ENCODE measurements at regions of chrX and their contacts with region 1.

Region 1: GRCh38 chrX:147911192-147912022 is at the start of gene FMR1:
- DNase-seq: peak; percentile 91
- H3K4me3 Mint-ChIP-seq: peak within 1 kb of the TSS; percentile 96
- H3K27ac Mint-ChIP-seq: peak within 1 kb of the TSS; percentile 92
- H3K4me1 Mint-ChIP-seq: peaks cover 37% of the 10 kb centered on the region
- H3K27me3 Mint-ChIP-seq: no peaks in the 10 kb centered on the region
- total RNA-seq, gene FMR1: 35.9 and 37.5 TPM in 2 replicates

Region 2: GRCh38 chrX:147738265-147738664 is 173.1 kb before region 1 on chrX:
- intact Hi-C with region 1: loop called (anchors 1 kb)
- DNase-seq: peak; percentile 1
- H3K4me3 Mint-ChIP-seq: peak overlapping the region; percentile 40
- H3K27ac Mint-ChIP-seq: peak overlapping the region; percentile 84
- H3K4me1 Mint-ChIP-seq: peaks cover 33% of the 10 kb centered on the region
- H3K27me3 Mint-ChIP-seq: no peaks in the 10 kb centered on the region

Region 3: DNA sequence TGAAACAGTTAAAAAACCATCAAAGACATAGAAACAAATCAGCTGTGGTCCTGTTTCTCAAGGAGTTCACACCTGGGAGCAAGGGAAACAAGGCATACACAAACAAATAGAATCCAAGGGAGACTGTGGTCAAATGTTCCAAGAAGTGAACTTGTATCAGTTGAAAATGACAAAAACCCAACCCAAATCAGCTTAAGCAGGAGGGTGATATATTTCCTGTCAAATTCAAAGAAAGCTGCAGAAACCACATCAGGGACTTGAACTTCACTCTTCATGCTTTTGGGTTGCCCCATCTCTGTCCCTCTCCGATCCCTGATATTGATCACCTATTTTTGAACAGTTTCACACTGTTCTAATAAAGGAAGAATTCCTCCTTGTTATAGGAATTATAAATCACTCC is 148.3 kb before region 1 on chrX:
- intact Hi-C with region 1: no loop called
- DNase-seq: no peak
- H3K4me3 Mint-ChIP-seq: no peak overlapping the region
- H3K27ac Mint-ChIP-seq: peak overlapping the region; percentile 50
- H3K4me1 Mint-ChIP-seq: peaks cover 25% of the 10 kb centered on the region
- H3K27me3 Mint-ChIP-seq: peaks cover 1% of the 10 kb centered on the region

Region 4: DNA sequence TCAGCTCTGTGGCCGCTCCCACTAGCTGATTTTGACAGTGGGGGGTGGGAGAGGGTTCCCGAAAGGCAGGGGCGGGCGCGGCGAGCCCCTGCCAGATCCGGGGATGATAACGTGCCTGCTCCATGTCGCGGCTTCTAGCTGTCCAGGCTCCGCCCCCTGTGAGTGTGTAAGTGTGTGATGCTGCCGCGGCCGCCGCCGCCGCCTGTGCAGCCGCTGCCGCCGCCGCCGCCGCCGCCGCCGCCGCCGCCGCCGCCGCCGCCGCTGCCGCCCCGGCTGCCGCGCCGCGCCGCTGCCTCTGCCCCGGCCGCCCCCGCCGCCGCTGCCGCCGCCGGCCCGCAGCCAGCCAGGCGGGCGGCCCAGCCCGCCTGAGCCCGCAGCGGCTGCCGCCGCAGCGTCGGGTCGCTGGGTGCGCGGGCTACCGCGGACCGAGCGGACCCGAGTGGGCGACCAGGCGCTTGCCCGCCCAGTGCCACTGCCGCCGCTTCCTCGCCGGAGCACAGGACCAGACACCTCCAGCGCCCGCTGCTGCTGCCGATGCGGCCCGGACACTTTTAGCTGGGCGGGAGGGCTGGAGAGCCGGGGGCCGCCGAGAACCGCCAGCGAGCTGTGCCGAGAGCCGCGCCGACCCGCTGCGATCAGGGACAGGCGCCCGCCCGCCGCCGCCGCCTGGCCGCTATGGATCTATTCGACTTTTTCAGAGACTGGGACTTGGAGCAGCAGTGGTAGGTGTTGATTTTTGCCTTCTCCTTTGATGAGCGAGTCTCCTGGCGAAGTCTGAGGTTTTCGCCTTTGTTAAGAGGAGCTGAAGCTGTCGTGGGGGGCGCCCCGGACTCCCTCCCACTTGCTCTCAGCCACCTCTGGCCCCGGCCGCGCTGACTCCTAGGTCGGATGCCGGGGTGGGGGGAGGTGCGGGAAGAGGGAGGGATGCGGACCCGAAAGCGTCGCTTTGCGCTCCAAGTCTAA is 589.3 kb after region 1 on chrX and contains the start of gene AFF2:
- intact Hi-C with region 1: loop called (anchors 2 kb)
- DNase-seq: no peak
- H3K4me3 Mint-ChIP-seq: peak within 1 kb of the TSS; percentile 85
- H3K27ac Mint-ChIP-seq: peak within 1 kb of the TSS; percentile 18
- H3K4me1 Mint-ChIP-seq: peaks cover 15% of the 10 kb centered on the region
- H3K27me3 Mint-ChIP-seq: peaks cover 13% of the 10 kb centered on the region
- total RNA-seq, gene AFF2: 1.5 and 1.8 TPM in 2 replicates

Region 5: GRCh38 chrX:149631234-149632165 is 1720.1 kb after region 1 on chrX and contains the start of gene TMEM185A:
- intact Hi-C with region 1: loop called (anchors 5 kb)
- DNase-seq: peak; percentile 73
- H3K4me3 Mint-ChIP-seq: peak within 1 kb of the TSS; percentile 95
- H3K27ac Mint-ChIP-seq: peak within 1 kb of the TSS; percentile 85
- H3K4me1 Mint-ChIP-seq: peaks cover 43% of the 10 kb centered on the region
- H3K27me3 Mint-ChIP-seq: peaks cover 1% of the 10 kb centered on the region
- total RNA-seq, gene TMEM185A: 18.7 and 25.5 TPM in 2 replicates

Region 6: DNA sequence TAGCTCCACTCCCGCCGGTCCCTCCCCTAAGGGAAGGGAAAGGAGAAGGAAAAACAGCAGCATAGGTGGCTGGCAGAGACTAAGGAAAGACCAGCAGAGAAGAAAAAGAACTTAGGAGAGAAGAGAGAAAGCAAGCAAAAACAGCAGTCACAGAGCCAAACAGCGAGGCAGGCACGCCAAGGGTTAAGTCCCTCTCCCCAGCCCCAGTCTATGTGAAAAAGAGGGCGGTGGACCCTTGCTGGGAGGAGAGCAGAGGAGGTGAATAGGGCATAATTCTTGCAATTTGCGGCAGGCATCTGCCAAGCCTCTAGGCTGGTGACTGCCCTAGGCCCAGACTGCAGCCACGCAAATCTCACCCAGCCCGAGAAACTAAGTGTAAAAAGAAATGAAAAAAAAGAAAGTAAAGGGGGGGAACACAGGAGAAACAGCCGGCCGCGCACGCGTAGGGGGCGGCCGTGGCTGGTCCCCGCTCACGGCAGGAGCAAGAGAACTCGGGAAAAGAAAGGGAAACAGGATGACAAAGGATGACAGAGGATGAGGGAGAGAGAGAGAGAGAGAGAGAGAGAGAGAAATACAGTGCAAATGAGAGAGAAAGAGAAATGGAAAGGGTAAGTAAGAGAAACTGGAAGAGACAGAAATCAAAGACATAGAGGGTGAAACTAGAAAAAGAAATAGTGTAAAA is 1918.9 kb after region 1 on chrX:
- intact Hi-C with region 1: loop called (anchors 10 kb)
- DNase-seq: peak; percentile 14
- H3K4me3 Mint-ChIP-seq: peak overlapping the region; percentile 78
- H3K27ac Mint-ChIP-seq: peak overlapping the region; percentile 97
- H3K4me1 Mint-ChIP-seq: peaks cover 61% of the 10 kb centered on the region
- H3K27me3 Mint-ChIP-seq: peaks cover 4% of the 10 kb centered on the region